Mucosa of descending colon (tissue), 3 donors: ENCODE measurements at regions of chr9 and their contacts with region 1.

Region 1: GRCh38 chr9:36407122-36407723 is 7.2 kb upstream of the RNF38 start:
- DNase-seq: peak in 2 of 3 donors; percentile 55 to 78
- ATAC-seq: peak; percentile 99
- H3K4me3 ChIP-seq: no peak overlapping the region
- H3K4me1 ChIP-seq: peaks cover under 1% of the 10 kb centered on the region
- CTCF ChIP-seq: peak; percentile 81

Region 2: DNA sequence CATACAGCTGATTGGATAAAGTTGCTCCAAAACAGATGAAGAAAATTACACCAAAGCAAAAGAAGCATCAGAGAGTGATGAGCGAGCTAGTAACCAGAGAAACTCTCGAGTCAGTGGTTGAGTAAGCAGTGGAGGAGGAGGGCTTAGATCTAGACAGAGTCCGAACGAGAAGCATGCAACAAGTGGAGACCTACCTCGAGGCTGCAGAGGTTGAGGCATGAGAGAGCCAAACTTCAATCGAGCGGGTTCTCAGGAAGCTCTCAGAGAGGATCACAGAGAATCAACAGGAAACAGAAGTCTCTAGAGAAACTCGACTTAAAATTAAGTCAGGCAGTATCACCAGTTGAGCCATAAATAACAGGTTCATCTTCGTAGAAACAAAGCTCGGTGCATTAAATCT is 911.2 kb before region 1 on chr9:
- intact Hi-C with region 1: no loop called
- DNase-seq: no peak
- ATAC-seq: no peak
- H3K4me3 ChIP-seq: no peak overlapping the region
- H3K4me1 ChIP-seq: no peaks in the 10 kb centered on the region
- CTCF ChIP-seq: no peak

Region 3: DNA sequence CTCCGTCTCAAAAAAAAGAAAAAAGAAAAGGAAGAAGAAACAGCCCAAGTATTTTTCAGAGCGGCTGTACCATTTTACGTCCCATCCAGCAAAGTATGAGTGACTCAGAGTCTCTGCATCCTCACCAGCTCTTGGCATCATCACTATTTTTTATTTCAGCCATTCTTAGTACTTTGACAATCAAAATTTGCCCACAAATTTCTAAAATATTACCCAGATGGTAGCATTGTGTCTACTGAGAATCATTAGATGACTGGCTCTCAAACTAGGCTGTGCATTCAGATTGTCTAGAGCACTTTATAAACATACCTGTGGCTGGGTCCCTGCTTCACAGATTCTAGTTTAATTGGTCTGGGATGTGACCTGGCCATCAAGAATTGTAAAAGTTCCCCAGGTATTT is 143.9 kb after region 1 on chr9:
- intact Hi-C with region 1: loop called (anchors 2 to 5 kb)
- DNase-seq: no peak
- ATAC-seq: no peak
- H3K4me3 ChIP-seq: no peak overlapping the region
- H3K4me1 ChIP-seq: no peaks in the 10 kb centered on the region
- CTCF ChIP-seq: no peak

Region 4: GRCh38 chr9:36560857-36561221 is 153.6 kb after region 1 on chr9:
- intact Hi-C with region 1: loop called in 1 of 2 experiments (anchors 5 kb)
- DNase-seq: no peak
- ATAC-seq: no peak
- H3K4me3 ChIP-seq: no peak overlapping the region
- H3K4me1 ChIP-seq: no peaks in the 10 kb centered on the region
- CTCF ChIP-seq: no peak